Mammary epithelial cell (primary cell): ENCODE measurements at regions of chr3 and their contacts with region 1.

Region 1: DNA sequence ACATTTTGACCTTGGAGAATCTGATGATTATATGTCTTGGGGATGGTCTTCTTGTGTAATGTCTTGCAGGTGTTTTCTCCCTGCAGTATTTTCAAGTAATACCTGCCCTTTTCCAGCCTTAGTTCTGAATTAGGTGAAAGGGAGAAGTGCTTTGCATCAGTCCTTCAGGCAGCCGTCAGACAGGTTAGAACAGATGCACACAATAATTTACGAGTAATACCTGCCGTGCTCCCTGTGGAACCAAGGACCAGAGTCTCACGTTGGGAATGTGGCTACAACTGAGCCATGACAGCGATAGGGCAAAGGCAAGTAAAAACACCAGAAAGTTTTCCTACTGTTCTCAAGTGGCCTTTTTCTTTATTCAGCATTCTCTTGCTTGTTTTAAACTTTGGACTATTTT is 69.1 kb downstream of the CHCHD6 start:
- DNase-seq: peak; percentile 23
- H3K4me3 ChIP-seq: no peak overlapping the region
- H3K27ac ChIP-seq: no peak overlapping the region
- H3K4me1 ChIP-seq: peaks cover 15% of the 10 kb centered on the region
- H3K27me3 ChIP-seq: no peaks in the 10 kb centered on the region
- CTCF ChIP-seq: no peak

Region 2: DNA sequence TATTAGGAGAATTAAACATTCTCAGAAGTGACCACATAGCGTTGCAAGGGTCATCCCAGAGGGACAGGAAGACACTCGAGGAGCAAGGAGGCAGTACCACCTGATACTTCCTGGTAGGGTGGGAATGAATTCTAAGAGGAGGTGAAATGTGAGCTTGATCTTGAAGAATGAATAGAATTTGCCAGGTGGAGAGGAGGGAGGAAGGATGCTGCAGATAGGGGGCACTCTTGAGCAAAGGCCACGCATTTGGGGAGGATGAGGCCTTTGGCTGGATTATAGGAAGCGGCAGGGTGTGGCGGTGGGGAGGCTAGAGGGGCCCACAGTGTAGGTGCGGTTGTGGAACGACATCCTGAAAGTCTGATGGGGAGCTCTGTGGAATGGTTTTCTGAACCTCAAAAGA is 35.6 kb before region 1 on chr3:
- CTCF ChIA-PET with region 1: no interaction called
- dilution Hi-C with region 1: no loop called
- in situ Hi-C with region 1: no loop called
- intact Hi-C with region 1: no loop called
- DNase-seq: no peak
- H3K4me3 ChIP-seq: no peak overlapping the region
- H3K27ac ChIP-seq: no peak overlapping the region
- H3K4me1 ChIP-seq: no peaks in the 10 kb centered on the region
- H3K27me3 ChIP-seq: no peaks in the 10 kb centered on the region
- CTCF ChIP-seq: peak in 1 of 2 donors; percentile 2

Region 3: GRCh38 chr3:126845920-126846715 is 73.0 kb after region 1 on chr3:
- CTCF ChIA-PET with region 1: no interaction called
- dilution Hi-C with region 1: loop called (anchors 5 kb)
- in situ Hi-C with region 1: no loop called
- intact Hi-C with region 1: no loop called
- DNase-seq: peak; percentile 11
- H3K4me3 ChIP-seq: no peak overlapping the region
- H3K27ac ChIP-seq: no peak overlapping the region
- H3K4me1 ChIP-seq: peaks cover 2% of the 10 kb centered on the region
- H3K27me3 ChIP-seq: no peaks in the 10 kb centered on the region
- CTCF ChIP-seq: no peak